WTC11 (cell line): ENCODE measurements at regions of chr15 and their contacts with region 1.

Region 1: DNA sequence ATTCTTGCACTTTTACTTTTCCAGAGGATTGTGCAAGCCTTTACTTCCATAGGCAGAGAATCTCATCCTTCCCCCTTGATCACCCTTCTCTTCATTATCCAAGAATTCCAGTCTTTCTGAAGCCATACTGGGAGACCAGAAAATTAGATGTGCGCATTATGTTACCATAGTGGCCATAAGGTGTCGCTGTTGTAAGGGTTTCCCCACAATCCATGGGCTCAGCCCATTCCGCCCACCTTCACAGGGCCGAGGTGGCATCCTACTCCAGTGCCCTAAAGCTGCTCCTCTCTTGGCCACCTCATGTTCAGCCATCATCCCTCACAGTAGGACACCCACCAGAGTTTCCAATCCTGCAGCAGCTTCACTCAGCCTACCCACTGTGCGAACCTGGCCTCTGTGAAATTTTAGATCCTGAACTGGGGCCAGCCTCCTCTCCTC is 35.0 kb downstream of the CTSH start:
- DNase-seq: peak; percentile 65
- ATAC-seq: peak; percentile 79
- H3K4me3 Mint-ChIP-seq: no peak overlapping the region
- H3K27ac Mint-ChIP-seq: peak overlapping the region; percentile 89
- H3K4me1 Mint-ChIP-seq: peaks cover 26% of the 10 kb centered on the region
- H3K27me3 Mint-ChIP-seq: no peaks in the 10 kb centered on the region
- CTCF ChIP-seq: peak; percentile 70

Region 2: GRCh38 chr15:78895471-78895870 is 14.3 kb before region 1 on chr15:
- CTCF ChIA-PET with region 1: interaction called, 12 read pairs
- POLR2A ChIA-PET with region 1: no interaction called
- DNase-seq: no peak
- ATAC-seq: no peak
- H3K4me3 Mint-ChIP-seq: no peak overlapping the region
- H3K27ac Mint-ChIP-seq: no peak overlapping the region
- H3K4me1 Mint-ChIP-seq: peaks cover 10% of the 10 kb centered on the region
- H3K27me3 Mint-ChIP-seq: no peaks in the 10 kb centered on the region
- CTCF ChIP-seq: no peak

Region 3: DNA sequence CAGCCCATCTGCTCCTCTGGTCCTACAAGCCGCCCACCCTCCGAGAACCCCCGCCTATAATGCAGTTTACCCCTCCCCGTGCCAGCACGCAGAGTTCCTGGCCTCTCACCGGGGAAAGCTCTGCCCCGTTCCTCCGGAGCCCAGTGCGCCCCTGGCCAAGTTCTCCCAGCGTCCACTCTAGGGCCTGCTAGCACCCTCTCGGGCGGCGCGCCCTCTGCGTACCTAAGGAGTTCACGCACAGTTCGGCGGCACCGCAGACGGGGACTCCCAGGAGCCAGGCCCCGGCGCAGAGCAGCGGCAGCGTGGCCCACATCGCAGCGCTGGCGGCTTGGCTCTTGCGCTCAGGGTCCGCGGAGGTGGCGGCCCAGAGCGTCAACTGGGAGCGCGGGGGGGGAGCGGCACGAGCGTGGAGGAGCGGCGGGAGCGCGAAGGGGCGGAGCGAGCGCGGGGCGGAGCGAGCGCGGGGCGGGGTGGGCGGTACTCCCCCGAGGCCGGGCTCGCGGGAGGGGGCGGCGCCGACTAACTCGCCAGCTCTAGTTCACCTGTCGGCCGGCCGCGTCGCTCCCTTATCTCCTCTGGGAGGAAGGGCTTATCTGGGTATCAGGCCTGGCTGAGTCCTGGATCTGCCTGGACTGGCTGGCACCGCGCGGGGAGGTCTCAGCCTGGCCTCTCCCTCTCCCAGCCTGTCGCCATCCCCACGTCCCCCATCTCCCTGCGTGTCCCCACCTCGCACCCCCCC is 35.0 kb after region 1 on chr15 and contains the start of gene CTSH:
- CTCF ChIA-PET with region 1: interaction called, 25 read pairs
- POLR2A ChIA-PET with region 1: no interaction called
- DNase-seq: peak; percentile 90
- ATAC-seq: peak; percentile 94
- H3K4me3 Mint-ChIP-seq: peak within 1 kb of the TSS; percentile 70
- H3K27ac Mint-ChIP-seq: no peak within 1 kb of the TSS
- H3K4me1 Mint-ChIP-seq: peaks cover 8% of the 10 kb centered on the region
- H3K27me3 Mint-ChIP-seq: peaks cover 47% of the 10 kb centered on the region
- CTCF ChIP-seq: no peak
- total RNA-seq, gene CTSH: 20.4 to 31.8 TPM (median 31.1 TPM) in 3 replicates

Region 4: GRCh38 chr15:78988361-78988911 is 78.6 kb after region 1 on chr15:
- CTCF ChIA-PET with region 1: interaction called, 11 read pairs
- POLR2A ChIA-PET with region 1: no interaction called
- DNase-seq: no peak
- ATAC-seq: no peak; the same call in 1 of the 2 replicates
- H3K4me3 Mint-ChIP-seq: no peak overlapping the region
- H3K27ac Mint-ChIP-seq: no peak overlapping the region
- H3K4me1 Mint-ChIP-seq: no peaks in the 10 kb centered on the region
- H3K27me3 Mint-ChIP-seq: no peaks in the 10 kb centered on the region; the same call in 1 of the 2 replicates
- CTCF ChIP-seq: no peak

Region 5: DNA sequence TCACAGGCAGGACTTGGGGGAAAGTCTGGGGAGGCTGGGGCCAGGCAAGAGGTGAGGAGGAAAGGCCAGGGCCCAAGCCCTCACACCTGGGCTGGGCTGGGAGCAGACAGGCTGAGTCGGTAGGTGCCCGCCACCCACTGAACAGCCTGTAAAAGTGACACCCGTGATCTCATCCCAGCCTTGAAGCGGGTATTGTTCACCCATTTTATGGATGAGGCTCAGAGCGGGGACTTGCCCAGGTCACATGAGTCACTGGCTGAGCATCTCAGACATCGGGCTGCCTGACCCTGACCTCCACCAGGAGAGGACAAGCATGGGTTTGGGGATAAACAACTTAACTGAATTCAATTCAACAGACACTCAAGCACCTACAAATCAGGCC is 87.1 kb after region 1 on chr15:
- CTCF ChIA-PET with region 1: interaction called, 11 read pairs
- POLR2A ChIA-PET with region 1: interaction called, 3 read pairs
- DNase-seq: no peak
- ATAC-seq: no peak
- H3K4me3 Mint-ChIP-seq: no peak overlapping the region
- H3K27ac Mint-ChIP-seq: no peak overlapping the region
- H3K4me1 Mint-ChIP-seq: peaks cover 9% of the 10 kb centered on the region
- H3K27me3 Mint-ChIP-seq: no peaks in the 10 kb centered on the region; the same call in 1 of the 2 replicates
- CTCF ChIP-seq: no peak

Region 6: DNA sequence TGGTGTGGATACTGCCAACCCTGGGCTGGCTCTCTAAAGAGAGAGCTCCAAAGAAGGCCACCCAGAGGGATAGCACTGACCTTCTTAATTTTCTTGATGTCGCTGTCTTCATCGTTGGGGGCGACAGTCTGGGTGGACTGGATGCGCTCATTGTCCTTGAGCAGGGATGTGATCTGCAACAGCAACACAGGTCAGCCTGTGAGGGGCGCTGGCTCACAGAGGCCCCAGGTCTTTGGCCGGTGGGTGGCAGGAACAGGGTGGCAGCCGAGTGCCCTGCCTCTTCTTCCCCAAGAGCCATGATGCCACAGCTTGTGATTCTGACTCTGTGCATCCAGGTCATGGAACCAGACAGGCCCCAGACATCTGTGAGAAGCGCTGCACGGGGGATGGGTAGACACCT is 139.6 kb after region 1 on chr15:
- CTCF ChIA-PET with region 1: interaction called, 11 read pairs
- POLR2A ChIA-PET with region 1: no interaction called
- DNase-seq: no peak
- ATAC-seq: no peak
- H3K4me3 Mint-ChIP-seq: no peak overlapping the region
- H3K27ac Mint-ChIP-seq: no peak overlapping the region
- H3K4me1 Mint-ChIP-seq: no peaks in the 10 kb centered on the region
- H3K27me3 Mint-ChIP-seq: peaks cover 32% of the 10 kb centered on the region
- CTCF ChIP-seq: no peak